Adrenal gland (tissue), 19 donors: ENCODE measurements at regions of chr15 and their contacts with region 1.

Region 1: GRCh38 chr15:74053941-74054529 is 28.3 kb downstream of the GOLGA6A start:
- DNase-seq: peak; percentile 66 to 82 (median 75)
- H3K4me3 ChIP-seq: no peak overlapping the region
- H3K27ac ChIP-seq: no peak overlapping the region
- H3K4me1 ChIP-seq: peaks cover 0 to 23% of the 10 kb centered on the region in 2 donors
- H3K27me3 ChIP-seq: no peaks in the 10 kb centered on the region
- CTCF ChIP-seq: peak in 5 of 6 experiments; percentile 28 to 61 (median 54)
- POLR2A ChIP-seq: no peak

Region 2: DNA sequence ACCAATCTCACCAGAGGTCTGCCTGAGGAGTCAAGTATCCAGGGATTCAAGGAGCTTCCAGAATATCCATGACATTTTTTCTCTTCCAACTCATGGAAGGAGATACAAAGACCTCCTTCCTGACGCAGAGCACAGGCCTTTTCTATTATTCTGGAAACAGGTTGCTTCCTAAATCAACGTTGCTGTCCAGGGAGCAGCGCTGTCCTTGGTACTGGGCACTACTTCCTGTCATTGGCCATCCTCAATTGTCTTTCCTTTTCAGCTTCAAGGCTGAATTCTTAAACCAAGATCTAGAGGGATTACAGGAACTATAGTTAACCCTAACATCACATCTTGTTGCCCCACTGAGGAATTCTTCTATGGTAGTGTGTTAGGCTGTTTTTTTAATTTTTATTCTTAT is 231.0 kb before region 1 on chr15:
- intact Hi-C with region 1: no loop called
- DNase-seq: peak in 1 of 7 donors; percentile 11
- H3K4me3 ChIP-seq: no peak overlapping the region
- H3K27ac ChIP-seq: no peak overlapping the region
- H3K4me1 ChIP-seq: no peaks in the 10 kb centered on the region
- H3K27me3 ChIP-seq: peaks cover 3% of the 10 kb centered on the region
- CTCF ChIP-seq: no peak
- POLR2A ChIP-seq: no peak

Region 3: GRCh38 chr15:73873889-73874511 is 180.0 kb before region 1 on chr15:
- intact Hi-C with region 1: no loop called
- DNase-seq: peak in 5 of 7 donors; percentile 23 to 57 (median 34)
- H3K4me3 ChIP-seq: no peak overlapping the region
- H3K27ac ChIP-seq: no peak overlapping the region
- H3K4me1 ChIP-seq: no peaks in the 10 kb centered on the region
- H3K27me3 ChIP-seq: peaks cover 8% of the 10 kb centered on the region
- CTCF ChIP-seq: peak; percentile 51 to 66 (median 53)
- POLR2A ChIP-seq: no peak

Region 4: DNA sequence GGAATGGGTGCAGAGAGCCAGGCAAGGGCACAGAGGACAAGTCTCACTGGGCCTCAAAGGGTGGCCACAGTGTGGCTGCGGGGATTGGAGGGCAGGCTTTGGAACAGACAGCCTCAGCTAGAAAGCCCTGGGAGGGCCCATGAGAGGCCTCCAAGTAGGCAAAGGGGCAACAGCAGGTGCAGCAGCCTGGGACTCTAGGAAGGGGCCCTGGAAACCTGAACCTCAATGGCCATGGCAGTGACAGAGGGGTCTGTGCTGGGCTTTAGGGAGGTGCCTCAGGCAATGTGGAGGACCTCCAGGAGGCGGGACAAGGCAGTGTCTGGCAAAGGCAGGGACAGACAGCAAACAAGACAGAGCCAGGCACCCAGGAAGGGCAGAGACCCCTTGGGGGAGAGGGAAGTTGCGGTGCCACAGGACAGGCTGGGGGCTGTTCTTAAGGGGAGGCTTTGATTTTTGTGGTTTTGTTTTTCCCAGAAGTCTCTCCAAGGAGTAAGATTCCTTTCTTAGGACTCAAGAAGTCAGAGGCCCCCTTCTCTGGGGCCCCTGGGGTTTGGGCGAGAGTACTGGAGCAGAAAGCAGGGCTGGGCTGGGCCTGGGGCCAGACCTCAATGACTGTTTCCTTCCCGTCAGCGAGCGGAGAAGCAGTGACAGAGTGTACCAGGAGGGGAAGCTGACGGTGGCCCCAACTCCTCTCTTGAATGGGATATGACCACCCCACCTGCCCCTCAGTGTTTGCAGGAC is 71.6 kb before region 1 on chr15:
- intact Hi-C with region 1: loop called in 1 of 2 experiments (anchors 5 kb)
- DNase-seq: peak; percentile 74 to 91 (median 90)
- H3K4me3 ChIP-seq: peak overlapping the region in 1 of 4 donors; percentile 8
- H3K27ac ChIP-seq: peak overlapping the region; percentile 40 to 95 (median 89)
- H3K4me1 ChIP-seq: peaks cover 40 to 56% of the 10 kb centered on the region in 2 donors
- H3K27me3 ChIP-seq: no peaks in the 10 kb centered on the region
- CTCF ChIP-seq: no peak
- POLR2A ChIP-seq: peak in 1 of 2 donors; percentile 59

Region 5: GRCh38 chr15:74127260-74127953 is 73.4 kb after region 1 on chr15:
- intact Hi-C with region 1: loop called (anchors 5 to 10 kb)
- DNase-seq: peak; percentile 82 to 94 (median 92)
- H3K4me3 ChIP-seq: peak overlapping the region in 1 of 4 donors; percentile 45
- H3K27ac ChIP-seq: no peak overlapping the region
- H3K4me1 ChIP-seq: peaks cover 0 to 11% of the 10 kb centered on the region in 2 donors
- H3K27me3 ChIP-seq: peaks cover 50% of the 10 kb centered on the region
- CTCF ChIP-seq: peak; percentile 89 to 99 (median 98)
- POLR2A ChIP-seq: no peak

Region 6: DNA sequence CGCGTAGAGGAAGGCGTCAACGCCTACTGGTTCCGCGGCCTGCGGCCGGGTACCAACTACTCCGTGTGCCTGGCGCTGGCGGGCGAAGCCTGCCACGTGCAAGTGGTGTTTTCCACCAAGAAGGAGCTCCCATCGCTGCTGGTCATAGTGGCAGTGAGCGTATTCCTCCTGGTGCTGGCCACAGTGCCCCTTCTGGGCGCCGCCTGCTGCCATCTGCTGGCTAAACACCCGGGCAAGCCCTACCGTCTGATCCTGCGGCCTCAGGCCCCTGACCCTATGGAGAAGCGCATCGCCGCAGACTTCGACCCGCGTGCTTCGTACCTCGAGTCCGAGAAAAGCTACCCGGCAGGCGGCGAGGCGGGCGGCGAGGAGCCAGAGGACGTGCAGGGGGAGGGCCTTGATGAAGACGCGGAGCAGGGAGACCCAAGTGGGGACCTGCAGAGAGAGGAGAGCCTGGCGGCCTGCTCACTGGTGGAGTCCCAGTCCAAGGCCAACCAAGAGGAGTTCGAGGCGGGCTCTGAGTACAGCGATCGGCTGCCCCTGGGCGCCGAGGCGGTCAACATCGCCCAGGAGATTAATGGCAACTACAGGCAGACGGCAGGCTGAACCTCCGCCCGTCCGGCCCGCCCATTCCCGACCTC is 80.5 kb after region 1 on chr15:
- intact Hi-C with region 1: loop called in 1 of 2 experiments (anchors 10 kb)
- DNase-seq: peak; percentile 29 to 73 (median 50)
- H3K4me3 ChIP-seq: no peak overlapping the region
- H3K27ac ChIP-seq: no peak overlapping the region
- H3K4me1 ChIP-seq: peaks cover 10 to 17% of the 10 kb centered on the region in 2 donors
- H3K27me3 ChIP-seq: peaks cover 73% of the 10 kb centered on the region
- CTCF ChIP-seq: peak; percentile 14 to 43 (median 32)
- POLR2A ChIP-seq: no peak

Region 7: GRCh38 chr15:74302821-74303359 is 248.9 kb after region 1 on chr15:
- intact Hi-C with region 1: loop called in 1 of 2 experiments (anchors 5 kb)
- DNase-seq: peak in 4 of 7 donors; percentile 27 to 70 (median 44)
- H3K4me3 ChIP-seq: no peak overlapping the region
- H3K27ac ChIP-seq: no peak overlapping the region
- H3K4me1 ChIP-seq: peaks cover 5 to 7% of the 10 kb centered on the region in 2 donors
- H3K27me3 ChIP-seq: peaks cover 5% of the 10 kb centered on the region
- CTCF ChIP-seq: peak; percentile 43 to 69 (median 62)
- POLR2A ChIP-seq: no peak

Region 8: DNA sequence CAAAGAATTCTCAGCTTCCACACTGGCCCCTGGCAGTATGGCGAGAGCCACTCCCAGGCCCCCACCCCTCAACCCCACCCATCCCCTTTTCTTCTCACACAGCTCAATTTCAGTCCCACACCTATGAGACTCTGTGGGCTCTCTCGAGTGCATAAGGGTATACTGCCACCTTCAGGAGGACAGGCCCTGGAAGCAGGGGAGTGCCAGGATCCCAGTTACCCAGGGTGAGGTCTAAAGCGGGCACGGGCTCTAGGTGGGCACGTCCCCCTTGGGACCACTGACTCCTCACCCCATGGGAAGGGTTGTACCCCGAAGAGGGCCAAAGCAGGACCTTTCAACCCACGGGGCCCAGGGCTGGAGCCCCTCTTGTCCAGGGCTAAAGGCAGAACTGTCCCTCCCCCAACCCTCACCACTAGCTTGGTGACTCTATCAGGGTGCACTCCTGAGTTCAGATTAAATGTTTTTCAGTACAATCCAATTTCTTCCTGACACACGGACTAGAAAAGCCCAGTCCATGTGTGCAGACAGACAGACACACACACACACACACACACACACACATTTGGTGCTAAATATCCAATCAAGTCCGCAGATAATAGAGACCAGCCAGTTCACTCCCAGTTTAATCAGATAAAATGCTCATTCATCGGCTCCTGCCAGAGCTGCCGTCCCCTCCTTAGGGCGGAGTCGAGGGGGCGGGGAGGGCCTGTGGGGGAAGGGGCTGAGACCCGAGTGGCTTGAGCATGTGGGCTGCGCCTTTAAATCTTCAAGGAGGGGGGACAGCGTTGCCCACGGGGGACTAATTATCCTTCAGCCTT is 254.0 kb after region 1 on chr15:
- intact Hi-C with region 1: loop called (anchors 5 kb)
- DNase-seq: peak; percentile 55 to 83 (median 73)
- H3K4me3 ChIP-seq: no peak overlapping the region
- H3K27ac ChIP-seq: no peak overlapping the region
- H3K4me1 ChIP-seq: peaks cover 0 to under 1% of the 10 kb centered on the region in 2 donors
- H3K27me3 ChIP-seq: peaks cover 5% of the 10 kb centered on the region
- CTCF ChIP-seq: peak; percentile 54 to 76 (median 68)
- POLR2A ChIP-seq: no peak

Region 9: DNA sequence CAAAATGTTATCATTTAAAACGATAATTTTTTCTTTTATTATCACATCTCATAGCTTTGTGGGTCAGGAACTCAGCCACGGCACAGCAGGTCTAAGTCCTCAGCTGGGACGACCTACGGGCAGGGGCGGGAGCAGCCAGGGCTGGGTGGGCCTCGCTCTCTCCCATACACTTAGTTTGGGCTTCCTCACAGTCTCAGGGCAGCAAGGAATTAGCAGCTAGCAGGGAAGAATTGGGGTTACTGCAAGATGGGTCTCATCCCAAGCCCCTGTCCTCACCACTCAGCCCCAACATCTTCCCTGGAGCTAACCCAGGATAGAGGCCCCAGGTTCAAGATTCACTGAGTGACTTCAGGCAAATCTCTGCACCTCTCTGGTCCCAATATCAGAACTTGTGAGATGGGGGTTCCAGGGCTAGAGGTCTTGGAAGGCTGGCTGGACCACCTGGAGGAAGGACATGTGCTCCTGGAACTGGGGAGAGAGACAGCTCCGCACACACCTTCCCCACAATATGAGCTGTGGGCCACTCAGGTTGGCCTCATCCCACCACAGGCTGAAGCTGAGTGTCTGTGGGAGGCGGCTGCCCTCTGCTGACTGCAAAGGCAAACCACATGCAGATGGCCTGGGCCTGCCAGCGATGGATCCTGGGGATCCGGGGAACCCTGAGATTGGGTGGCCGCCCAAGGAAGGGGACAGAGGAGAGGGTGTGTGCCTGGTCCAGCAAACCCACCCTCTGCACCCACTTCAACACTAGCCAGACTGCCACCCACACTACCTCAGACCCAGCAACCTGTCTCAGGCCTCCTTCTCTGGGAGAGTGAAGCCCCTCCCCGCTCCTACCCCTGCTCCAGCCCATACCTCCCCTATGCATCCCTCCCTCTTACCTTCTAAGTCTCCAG is 268.4 kb after region 1 on chr15:
- intact Hi-C with region 1: loop called in 1 of 2 experiments (anchors 5 kb)
- DNase-seq: peak; percentile 71 to 87 (median 83)
- H3K4me3 ChIP-seq: no peak overlapping the region
- H3K27ac ChIP-seq: peak overlapping the region in 1 of 5 donors; percentile 26
- H3K4me1 ChIP-seq: peaks cover 19 to 36% of the 10 kb centered on the region in 2 donors
- H3K27me3 ChIP-seq: no peaks in the 10 kb centered on the region
- CTCF ChIP-seq: peak; percentile 59 to 91 (median 84)
- POLR2A ChIP-seq: no peak